Tibial artery (tissue), 4 donors: ENCODE measurements at regions of chr2 and their contacts with region 1.

Region 1: DNA sequence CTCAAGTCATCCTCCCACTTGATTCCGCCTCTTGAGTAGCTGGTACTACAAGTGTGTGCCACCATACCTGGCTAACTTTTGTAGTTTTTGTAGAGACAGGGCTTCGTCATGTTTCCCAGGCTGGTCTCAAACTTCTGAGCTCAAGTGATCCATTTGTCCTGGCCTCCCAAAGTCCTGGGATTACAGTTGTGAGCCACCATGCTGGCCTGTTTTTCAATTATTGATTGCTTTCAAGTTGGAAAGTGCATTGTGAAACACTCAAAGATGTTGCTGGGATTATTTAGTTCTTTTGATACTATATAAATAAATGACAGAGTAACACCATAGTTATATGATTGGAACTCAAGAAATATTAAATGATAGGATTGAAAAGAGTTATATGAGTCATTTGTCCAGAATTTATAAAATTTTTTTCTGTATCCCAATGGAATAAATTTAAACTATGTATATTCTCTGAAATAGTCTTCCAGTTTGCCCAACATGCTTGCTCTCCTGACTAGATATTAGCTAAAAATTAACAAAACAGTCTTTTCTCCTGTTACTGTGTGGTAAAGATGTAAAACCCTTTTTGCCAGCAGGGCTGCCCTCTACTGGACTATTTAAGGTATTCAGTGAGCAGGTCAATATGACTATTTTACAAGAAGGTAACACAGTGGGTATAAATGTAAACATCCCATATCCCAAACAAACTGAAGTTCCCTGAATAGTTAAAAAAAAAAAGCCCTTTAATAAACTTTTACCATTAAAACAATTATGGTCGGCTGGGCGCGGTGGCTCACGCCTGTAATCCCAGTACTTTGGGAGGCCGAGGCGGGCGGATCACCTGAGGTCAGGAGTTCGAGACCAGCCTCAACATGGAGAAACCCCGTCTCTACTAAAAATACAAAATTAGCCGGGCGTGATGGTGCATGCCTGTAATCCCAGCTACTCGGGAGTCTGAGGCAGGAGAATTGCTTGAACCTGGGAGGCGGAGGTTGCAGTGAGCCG is 42.7 kb downstream of the ACSL3 start:
- DNase-seq: peak in 1 of 2 donors; percentile 32
- H3K4me3 ChIP-seq: no peak overlapping the region
- H3K27ac ChIP-seq: peak overlapping the region; percentile 30 to 50
- H3K4me1 ChIP-seq: peaks cover 0 to 55% (median 17%) of the 10 kb centered on the region in 4 donors
- H3K27me3 ChIP-seq: no peaks in the 10 kb centered on the region
- CTCF ChIP-seq: peak; percentile 58 to 66

Region 2: GRCh38 chr2:222358876-222359275 is 544.7 kb before region 1 on chr2:
- intact Hi-C with region 1: no loop called
- DNase-seq: peak in 1 of 2 donors; percentile 33
- H3K4me3 ChIP-seq: no peak overlapping the region
- H3K27ac ChIP-seq: no peak overlapping the region
- H3K4me1 ChIP-seq: no peaks in the 10 kb centered on the region
- H3K27me3 ChIP-seq: no peaks in the 10 kb centered on the region
- CTCF ChIP-seq: no peak

Region 3: GRCh38 chr2:222707689-222708525 is 195.6 kb before region 1 on chr2:
- intact Hi-C with region 1: loop called (anchors 5 kb)
- DNase-seq: peak; percentile 85 to 86
- H3K4me3 ChIP-seq: no peak overlapping the region
- H3K27ac ChIP-seq: peak overlapping the region; percentile 21 to 72
- H3K4me1 ChIP-seq: peaks cover 0 to 68% (median 17%) of the 10 kb centered on the region in 4 donors
- H3K27me3 ChIP-seq: no peaks in the 10 kb centered on the region
- CTCF ChIP-seq: peak; percentile 91 to 97

Region 4: GRCh38 chr2:223051693-223052289 is 148.3 kb after region 1 on chr2 and contains the start of gene KCNE4:
- intact Hi-C with region 1: no loop called
- DNase-seq: peak; percentile 60 to 82
- H3K4me3 ChIP-seq: peak within 1 kb of the TSS; percentile 73 to 75
- H3K27ac ChIP-seq: peak within 1 kb of the TSS; percentile 92 to 94
- H3K4me1 ChIP-seq: peaks cover 0 to 47% (median 25%) of the 10 kb centered on the region in 4 donors
- H3K27me3 ChIP-seq: no peaks in the 10 kb centered on the region
- CTCF ChIP-seq: no peak